Mucosa of descending colon (tissue), 3 donors: ENCODE measurements at regions of chr20 and their contacts with region 1.

Region 1: GRCh38 chr20:8043687-8044282 is 24.2 kb upstream of the TMX4 start:
- DNase-seq: peak in 1 of 3 donors; percentile 67
- ATAC-seq: peak; percentile 80
- H3K4me3 ChIP-seq: no peak overlapping the region
- H3K4me1 ChIP-seq: no peaks in the 10 kb centered on the region
- CTCF ChIP-seq: peak; percentile 41

Region 2: GRCh38 chr20:8449123-8449522 is 405.3 kb after region 1 on chr20:
- intact Hi-C with region 1: no loop called
- DNase-seq: no peak
- ATAC-seq: no peak
- H3K4me3 ChIP-seq: no peak overlapping the region
- H3K4me1 ChIP-seq: no peaks in the 10 kb centered on the region
- CTCF ChIP-seq: no peak

Region 3: DNA sequence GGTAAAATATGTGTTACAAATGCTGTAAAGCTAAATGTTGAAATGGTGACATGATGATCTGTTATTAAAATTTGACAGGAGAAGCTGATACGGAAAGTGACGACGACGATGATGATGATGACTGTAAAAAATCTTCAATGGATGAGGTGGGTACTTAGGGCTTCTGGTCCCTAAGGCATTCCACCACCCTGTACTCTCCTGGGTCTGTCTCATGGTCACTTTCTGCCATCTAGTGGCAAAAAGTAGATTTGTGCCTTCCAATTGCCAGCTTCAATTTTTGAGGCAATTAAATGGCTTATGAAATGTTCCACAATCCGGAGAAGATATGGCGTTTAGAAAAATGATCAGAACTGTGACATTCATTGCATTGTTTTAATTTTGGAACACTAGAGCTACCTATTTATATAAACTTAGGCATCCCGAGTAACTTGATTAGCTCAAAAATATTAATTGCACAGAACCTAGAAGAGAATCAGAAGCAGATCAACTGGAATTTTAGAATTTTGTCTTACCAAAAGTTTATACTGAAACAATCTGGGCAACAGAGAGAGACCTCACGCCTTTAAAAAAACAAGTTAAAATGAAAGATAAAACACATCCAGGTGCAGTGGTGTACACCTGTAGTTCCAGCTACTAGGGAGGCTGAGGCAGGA is 678.6 kb after region 1 on chr20:
- intact Hi-C with region 1: loop called (anchors 5 kb)
- DNase-seq: peak in 1 of 3 donors; percentile 64
- ATAC-seq: peak; percentile 63
- H3K4me3 ChIP-seq: no peak overlapping the region
- H3K4me1 ChIP-seq: no peaks in the 10 kb centered on the region
- CTCF ChIP-seq: no peak